ENCODE measurements at regions of chr1 and their contacts with region 1.

Region 1: GRCh38 chr1:221203224-221204054 is 324.2 kb downstream of the HLX start:
- DNase-seq: peak; percentile 77
- ATAC-seq: peak; percentile 63

Region 2: GRCh38 chr1:220810179-220810653 is 393.2 kb before region 1 on chr1:
- intact Hi-C with region 1: loop called (anchors 5 kb)
- DNase-seq: peak; percentile 86
- ATAC-seq: peak; percentile 79

Region 3: GRCh38 chr1:220873868-220874655 is 329.4 kb before region 1 on chr1:
- intact Hi-C with region 1: loop called (anchors 2 kb)
- DNase-seq: peak; percentile 41
- ATAC-seq: peak; percentile 33

Measured in left ventricle myocardium superior (tissue), 1 donor.